ENCODE measurements at regions of chr6 and their contacts with region 1.

Region 1: DNA sequence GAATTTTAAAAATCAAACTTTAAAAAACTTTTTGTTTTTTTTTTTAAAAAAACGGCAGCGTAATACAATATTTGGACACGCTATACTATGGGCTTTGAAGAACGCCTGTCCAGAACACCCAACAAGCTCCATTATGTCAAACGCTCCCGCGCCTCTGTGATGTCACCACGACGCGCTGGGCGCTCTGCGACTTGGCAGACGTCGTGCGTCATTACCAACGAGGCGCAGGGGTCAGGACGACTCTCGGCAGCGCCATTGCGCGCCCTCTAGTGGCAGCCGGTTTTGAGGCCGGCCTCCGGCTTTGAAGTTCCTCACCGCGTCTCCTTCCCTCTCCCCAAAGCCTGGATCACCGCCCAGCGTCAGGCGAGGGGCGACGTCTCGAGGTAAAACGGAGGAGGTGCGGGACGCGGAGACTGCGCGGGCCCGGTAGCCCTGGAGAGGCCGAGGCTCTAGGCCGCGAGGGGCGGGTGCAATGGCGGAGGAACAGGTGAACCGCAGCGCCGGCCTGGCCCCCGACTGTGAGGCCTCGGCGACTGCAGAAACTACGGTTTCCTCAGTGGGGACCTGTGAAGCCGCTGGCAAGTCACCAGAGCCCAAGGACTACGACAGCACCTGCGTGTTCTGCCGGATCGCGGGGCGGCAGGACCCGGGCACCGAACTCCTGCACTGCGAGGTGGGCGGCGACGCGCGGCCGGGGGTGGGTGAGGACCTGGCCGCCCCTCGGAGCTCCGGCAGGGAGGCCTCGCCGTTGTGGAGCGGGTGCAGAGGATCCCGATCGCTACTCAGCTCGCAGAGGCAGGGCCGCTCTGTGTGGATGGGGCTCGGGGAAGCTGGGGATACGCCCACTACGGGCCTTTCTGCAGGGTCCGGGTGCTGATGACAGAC is at the start of gene HINT3:
- DNase-seq: peak; percentile 93
- H3K4me3 ChIP-seq: peak within 1 kb of the TSS; percentile 87 to 94 (median 90)
- H3K27ac ChIP-seq: peak within 1 kb of the TSS; percentile 70
- H3K4me1 ChIP-seq: peaks cover 19% of the 10 kb centered on the region
- H3K27me3 ChIP-seq: no peaks in the 10 kb centered on the region
- CTCF ChIP-seq: peak; percentile 90 to 98
- total RNA-seq, gene HINT3: 13.3 to 23.5 TPM

Region 2: GRCh38 chr6:125314019-125314581 is 642.6 kb before region 1 on chr6:
- CTCF ChIA-PET with region 1: no interaction called
- dilution Hi-C with region 1: no loop called
- in situ Hi-C with region 1: loop called in 1 of 2 experiments (anchors 25 kb)
- intact Hi-C with region 1: loop called (anchors 5 kb)
- DNase-seq: peak; percentile 47
- H3K4me3 ChIP-seq: no peak overlapping the region
- H3K27ac ChIP-seq: no peak overlapping the region
- H3K4me1 ChIP-seq: no peaks in the 10 kb centered on the region
- H3K27me3 ChIP-seq: no peaks in the 10 kb centered on the region
- CTCF ChIP-seq: peak; percentile 71 to 88

Region 3: GRCh38 chr6:125790358-125791150 is 166.2 kb before region 1 on chr6 and contains the start of gene NCOA7:
- CTCF ChIA-PET with region 1: interaction called, 6 read pairs
- dilution Hi-C with region 1: no loop called
- in situ Hi-C with region 1: loop called (anchors 10 kb)
- intact Hi-C with region 1: loop called (anchors 1 kb)
- DNase-seq: peak; percentile 76
- H3K4me3 ChIP-seq: peak within 1 kb of the TSS; percentile 74 to 92 (median 75)
- H3K27ac ChIP-seq: peak within 1 kb of the TSS; percentile 58
- H3K4me1 ChIP-seq: peaks cover 39% of the 10 kb centered on the region
- H3K27me3 ChIP-seq: no peaks in the 10 kb centered on the region
- CTCF ChIP-seq: peak in 1 of 2 donors; percentile 8
- total RNA-seq, gene NCOA7: 29.0 to 29.1 TPM

Region 4: DNA sequence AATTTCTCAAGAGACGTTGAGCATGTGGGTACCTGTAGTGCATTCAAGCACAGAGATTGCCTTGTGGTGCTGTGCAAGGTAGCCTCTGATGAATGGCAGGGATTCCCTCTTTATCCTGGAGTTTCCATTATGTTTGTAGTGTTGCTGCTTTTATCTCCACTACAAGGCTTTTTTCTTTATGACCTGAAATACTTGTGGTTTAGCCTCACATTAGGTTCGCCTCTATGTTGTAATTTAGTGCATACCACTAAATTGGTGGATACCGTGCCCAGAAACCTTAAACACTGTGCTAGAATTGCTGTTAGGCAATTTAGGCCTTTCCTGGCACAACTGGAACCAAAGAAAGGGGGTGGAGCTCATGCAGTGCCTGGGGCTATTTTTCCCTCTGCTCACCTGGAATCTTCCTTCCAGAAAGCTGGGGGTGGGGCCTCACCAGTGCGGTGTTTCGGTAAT is 89.2 kb before region 1 on chr6:
- CTCF ChIA-PET with region 1: interaction called, 4 read pairs
- dilution Hi-C with region 1: no loop called
- in situ Hi-C with region 1: no loop called
- intact Hi-C with region 1: loop called (anchors 1 kb)
- DNase-seq: peak; percentile 99
- H3K4me3 ChIP-seq: peak overlapping the region in 1 of 3 experiments; percentile 21
- H3K27ac ChIP-seq: peak overlapping the region; percentile 90
- H3K4me1 ChIP-seq: peaks cover 26% of the 10 kb centered on the region
- H3K27me3 ChIP-seq: no peaks in the 10 kb centered on the region
- CTCF ChIP-seq: no peak

Region 5: GRCh38 chr6:125906158-125906998 is 50.4 kb before region 1 on chr6:
- CTCF ChIA-PET with region 1: interaction called, 4 read pairs
- dilution Hi-C with region 1: no loop called
- in situ Hi-C with region 1: no loop called
- intact Hi-C with region 1: loop called (anchors 1 kb)
- DNase-seq: no peak
- H3K4me3 ChIP-seq: no peak overlapping the region
- H3K27ac ChIP-seq: no peak overlapping the region
- H3K4me1 ChIP-seq: peaks cover 14% of the 10 kb centered on the region
- H3K27me3 ChIP-seq: no peaks in the 10 kb centered on the region
- CTCF ChIP-seq: peak; percentile 72 to 86

Region 6: DNA sequence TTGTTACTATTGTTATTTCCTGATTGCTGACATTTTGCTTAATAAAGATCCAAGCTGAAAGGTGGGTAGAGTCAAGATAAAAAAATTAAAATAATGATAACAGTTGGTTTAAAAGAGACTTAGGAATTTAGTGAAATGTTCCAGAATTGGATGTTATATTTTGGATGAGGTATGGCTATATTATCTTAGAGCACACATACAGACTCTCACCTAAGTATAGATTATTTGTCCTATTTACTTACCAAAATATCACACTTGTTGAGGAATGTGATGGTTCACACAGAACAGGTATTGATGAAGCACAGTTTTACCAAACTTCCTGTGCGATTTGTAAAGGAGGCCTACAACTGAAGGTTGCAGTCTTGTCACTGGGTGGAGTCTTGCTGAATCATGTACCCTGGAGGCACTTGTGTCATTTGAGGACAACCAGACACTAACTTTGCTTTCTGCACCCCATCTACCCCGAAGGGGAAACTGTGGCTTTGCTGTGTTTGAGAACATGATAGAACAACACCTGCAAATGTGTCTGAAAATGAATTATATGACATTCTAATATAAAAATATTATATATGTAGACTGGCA is 32.7 kb before region 1 on chr6:
- CTCF ChIA-PET with region 1: interaction called, 4 read pairs
- dilution Hi-C with region 1: no loop called
- in situ Hi-C with region 1: no loop called
- intact Hi-C with region 1: loop called (anchors 1 kb)
- DNase-seq: peak; percentile 78
- H3K4me3 ChIP-seq: no peak overlapping the region
- H3K27ac ChIP-seq: peak overlapping the region; percentile 52
- H3K4me1 ChIP-seq: peaks cover 30% of the 10 kb centered on the region
- H3K27me3 ChIP-seq: no peaks in the 10 kb centered on the region
- CTCF ChIP-seq: no peak

Region 7: DNA sequence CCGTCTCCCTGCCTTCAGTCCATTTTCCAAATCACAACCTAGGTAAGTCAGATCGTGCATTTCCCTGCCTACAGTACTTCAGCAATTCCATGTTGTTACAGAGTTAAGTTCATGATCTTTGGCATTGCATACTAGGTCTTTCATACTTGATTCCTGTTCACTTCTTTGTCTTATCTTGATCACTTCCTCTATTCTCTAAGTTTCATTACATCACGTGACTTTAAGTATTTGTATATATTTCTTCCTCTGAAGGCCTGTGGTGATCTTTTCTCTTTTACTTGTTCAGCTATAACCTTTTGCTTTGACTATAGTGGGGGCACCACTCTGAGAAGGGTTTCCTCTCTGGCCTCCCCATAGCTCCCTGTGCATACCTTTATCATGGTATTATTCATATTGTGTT is 129.8 kb after region 1 on chr6:
- CTCF ChIA-PET with region 1: no interaction called
- dilution Hi-C with region 1: no loop called
- in situ Hi-C with region 1: no loop called
- intact Hi-C with region 1: no loop called
- DNase-seq: no peak
- H3K4me3 ChIP-seq: no peak overlapping the region
- H3K27ac ChIP-seq: no peak overlapping the region
- H3K4me1 ChIP-seq: no peaks in the 10 kb centered on the region
- H3K27me3 ChIP-seq: no peaks in the 10 kb centered on the region
- CTCF ChIP-seq: no peak

Measured in mammary epithelial cell (primary cell).